Sigmoid colon (tissue), 7 donors: ENCODE measurements at regions of chr16 and their contacts with region 1.

Region 1: GRCh38 chr16:10579965-10580882 is at the start of gene EMP2:
- DNase-seq: peak; percentile 93
- H3K4me3 ChIP-seq: peak within 1 kb of the TSS; percentile 95 to 99 (median 98)
- H3K27ac ChIP-seq: peak within 1 kb of the TSS; percentile 98 to 99 (median 98)
- H3K4me1 ChIP-seq: peaks cover 0 to 56% (median 53%) of the 10 kb centered on the region in 4 donors
- H3K27me3 ChIP-seq: no peaks in the 10 kb centered on the region
- CTCF ChIP-seq: peak; percentile 37 to 60 (median 56)
- EP300 ChIP-seq: no peak
- POLR2A ChIP-seq: peak; percentile 37 to 75
- total RNA-seq, gene EMP2: 38.3 to 57.3 (median 42.8) TPM

Region 2: DNA sequence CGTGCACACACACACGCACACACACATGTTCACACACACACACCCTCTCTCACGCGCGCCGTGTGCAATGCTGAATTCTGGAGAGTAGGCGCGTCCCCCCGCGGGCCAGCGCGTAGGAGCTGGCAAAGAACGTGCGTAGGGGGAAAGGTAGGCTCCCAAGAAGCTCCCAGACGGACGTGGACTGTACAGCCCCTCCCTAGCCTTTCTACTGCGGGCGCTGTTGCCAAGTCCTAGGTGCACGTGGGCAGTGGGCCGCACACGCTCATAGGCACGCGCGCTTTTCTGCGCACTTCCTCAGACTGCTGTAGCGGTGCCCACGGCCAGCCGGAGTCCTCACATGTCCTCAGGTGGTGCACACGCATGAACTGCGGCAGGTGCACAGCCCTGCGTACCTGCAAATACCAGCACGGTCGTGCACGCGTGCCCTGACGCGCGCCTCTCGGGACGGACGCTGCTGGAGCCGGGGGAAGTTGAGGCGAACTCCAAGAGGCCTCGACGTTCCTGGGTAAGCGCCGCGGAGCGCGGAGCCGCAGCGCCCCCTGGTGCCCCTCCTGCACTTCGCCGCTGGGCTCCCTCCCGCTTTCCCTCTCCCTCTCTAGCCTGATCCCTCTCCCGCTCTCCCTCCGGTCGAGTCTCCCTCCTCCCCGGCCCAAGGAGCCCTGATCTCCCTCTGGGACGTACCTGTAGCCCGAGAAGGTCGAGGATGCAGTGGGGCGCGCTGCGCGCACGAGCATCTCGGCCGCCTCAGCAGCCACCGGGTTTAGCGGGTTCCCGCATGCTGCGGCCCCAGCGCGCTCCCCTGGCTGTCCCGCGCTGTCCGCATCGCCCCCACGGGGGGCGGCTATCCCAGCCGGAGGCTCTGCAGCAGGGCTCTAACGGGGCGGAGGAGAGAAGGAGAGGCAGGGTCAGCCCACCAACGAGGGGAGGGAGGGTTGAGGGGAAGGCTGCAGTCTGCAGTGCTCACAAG is 398.7 kb before region 1 on chr16:
- intact Hi-C with region 1: no loop called
- DNase-seq: peak; percentile 75
- H3K4me3 ChIP-seq: peak overlapping the region in 3 of 4 donors; percentile 24 to 40 (median 33)
- H3K27ac ChIP-seq: no peak overlapping the region
- H3K4me1 ChIP-seq: peaks cover 0 to 32% (median 29%) of the 10 kb centered on the region in 4 donors
- H3K27me3 ChIP-seq: peaks cover 24 to 76% (median 32%) of the 10 kb centered on the region in 3 donors
- CTCF ChIP-seq: peak; percentile 69 to 95 (median 78)
- EP300 ChIP-seq: no peak
- POLR2A ChIP-seq: no peak

Region 3: GRCh38 chr16:10521681-10522274 is 58.4 kb before region 1 on chr16:
- intact Hi-C with region 1: loop called (anchors 2 kb)
- DNase-seq: peak; percentile 76
- H3K4me3 ChIP-seq: no peak overlapping the region
- H3K27ac ChIP-seq: no peak overlapping the region
- H3K4me1 ChIP-seq: no peaks in the 10 kb centered on the region
- H3K27me3 ChIP-seq: no peaks in the 10 kb centered on the region
- CTCF ChIP-seq: peak; percentile 76 to 85 (median 78)
- EP300 ChIP-seq: no peak
- POLR2A ChIP-seq: no peak

Region 4: GRCh38 chr16:10641953-10642949 is 62.0 kb after region 1 on chr16:
- intact Hi-C with region 1: no loop called
- DNase-seq: no peak
- H3K4me3 ChIP-seq: no peak overlapping the region
- H3K27ac ChIP-seq: no peak overlapping the region
- H3K4me1 ChIP-seq: no peaks in the 10 kb centered on the region
- H3K27me3 ChIP-seq: no peaks in the 10 kb centered on the region
- CTCF ChIP-seq: no peak
- EP300 ChIP-seq: no peak
- POLR2A ChIP-seq: no peak

Region 5: DNA sequence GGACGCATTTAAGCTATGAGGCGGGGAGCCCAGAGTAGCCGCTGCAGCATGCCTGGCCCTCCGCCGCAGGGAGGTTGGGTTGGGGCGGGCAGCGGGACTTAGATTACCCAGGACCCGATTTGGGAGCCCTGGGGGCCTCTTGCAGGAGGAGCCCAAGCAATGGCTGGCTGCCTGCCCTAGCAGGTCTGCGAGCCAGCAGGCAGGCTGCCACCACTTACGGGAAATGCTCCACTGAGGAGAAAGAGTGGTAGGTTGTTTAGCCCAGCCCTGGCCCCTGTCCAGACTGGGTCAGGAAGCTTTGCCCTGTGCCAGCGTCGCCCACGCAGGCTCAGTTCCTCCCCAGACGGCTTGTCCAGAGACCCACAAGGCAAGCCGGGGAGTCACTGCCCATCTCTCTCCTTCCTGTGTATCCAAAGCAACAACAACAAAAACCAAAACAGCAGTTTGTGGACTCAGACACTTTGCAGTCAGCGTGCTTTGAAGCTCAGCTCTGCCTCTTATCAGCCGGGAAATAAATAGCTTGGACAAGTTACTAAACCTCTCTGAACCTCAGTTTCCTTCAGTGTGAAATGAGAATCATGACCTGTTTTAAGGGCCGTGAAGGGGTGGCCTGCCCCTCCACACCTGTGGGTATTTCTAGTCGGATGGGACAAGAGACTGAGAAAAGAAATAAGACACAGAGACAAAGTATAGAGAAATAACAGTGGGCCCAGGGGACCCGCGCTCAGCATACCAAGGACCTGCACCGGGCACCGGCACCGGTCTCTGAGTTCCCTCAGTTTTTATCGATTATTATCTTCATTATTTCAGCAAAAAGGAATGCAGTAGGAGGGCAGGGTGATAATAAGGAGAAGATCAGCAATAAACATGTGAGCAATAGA is 248.9 kb after region 1 on chr16:
- intact Hi-C with region 1: loop called (anchors 10 kb)
- DNase-seq: peak; percentile 96
- H3K4me3 ChIP-seq: peak overlapping the region in 3 of 4 donors; percentile 12 to 18 (median 16)
- H3K27ac ChIP-seq: peak overlapping the region; percentile 80 to 92 (median 92)
- H3K4me1 ChIP-seq: peaks cover 3 to 32% (median 30%) of the 10 kb centered on the region in 4 donors
- H3K27me3 ChIP-seq: no peaks in the 10 kb centered on the region
- CTCF ChIP-seq: no peak
- EP300 ChIP-seq: peak in 2 of 4 donors; percentile 60 to 76
- POLR2A ChIP-seq: no peak